K562 (cell line): ENCODE measurements at regions of chr19 and their contacts with region 1.

Region 1: DNA sequence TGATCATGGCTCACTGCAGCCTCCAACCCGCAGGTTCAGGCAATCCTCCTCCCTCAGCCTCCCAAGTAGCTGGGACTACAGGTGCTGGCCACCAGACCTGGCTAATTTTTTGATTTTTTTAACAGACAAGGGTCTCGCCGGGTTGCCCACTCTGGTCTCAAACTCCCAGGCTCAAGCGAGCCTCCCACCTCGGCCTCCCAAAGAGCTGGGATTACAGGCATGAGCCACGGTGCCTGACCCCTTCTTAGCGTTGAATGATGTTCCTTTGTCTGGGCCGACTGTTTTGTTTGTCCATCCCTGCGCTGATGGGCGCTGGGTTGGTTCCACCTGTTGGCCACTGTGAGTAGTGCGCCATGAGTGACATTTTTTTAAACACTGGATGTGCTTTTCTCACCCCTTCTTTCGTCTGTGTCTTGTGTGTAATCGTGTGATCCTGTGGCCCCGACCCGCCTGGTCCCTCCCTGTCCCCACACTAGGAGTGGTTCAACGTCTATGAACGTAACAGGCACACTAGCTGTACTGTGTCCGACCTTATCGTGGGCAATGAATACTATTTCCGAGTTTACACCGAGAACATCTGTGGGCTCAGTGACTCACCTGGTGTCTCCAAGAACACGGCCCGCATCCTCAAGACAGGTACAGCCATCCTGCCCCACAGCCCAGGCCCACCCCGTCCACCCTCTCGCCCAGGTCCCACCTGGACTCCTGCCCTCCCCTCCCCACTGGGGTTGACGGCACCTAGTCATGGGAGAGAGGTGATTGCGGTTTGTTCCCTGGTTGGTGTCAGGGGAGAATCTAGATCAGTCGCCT is 15.0 kb upstream of the EMC10 start:
- DNase-seq: peak; percentile 78 to 88 (median 82)
- ATAC-seq: peak; percentile 90
- H3K4me3 ChIP-seq: no peak overlapping the region
- H3K27ac ChIP-seq: peak overlapping the region; percentile 27; the same call in 1 of the 3 replicates
- H3K4me1 ChIP-seq: peaks cover 8 to 38% of the 10 kb centered on the region in 2 experiments; a peak in 4 of 5 replicates
- H3K27me3 ChIP-seq: peaks cover 6 to 17% of the 10 kb centered on the region in 2 experiments; a peak in 4 of 5 replicates
- CTCF ChIP-seq: peak; percentile 85 to 93 (median 93)
- EP300 ChIP-seq: no peak
- POLR2A ChIP-seq: no peak
- RAD21 ChIP-seq: peak; percentile 74 to 91

Region 2: GRCh38 chr19:50368649-50369570 is 92.4 kb before region 1 on chr19:
- CTCF ChIA-PET with region 1: interaction called, 15 read pairs
- POLR2A ChIA-PET with region 1: interaction called, 7 read pairs
- in situ Hi-C with region 1: loop called (anchors 5 kb)
- intact Hi-C with region 1: loop called (anchors 1 kb)
- DNase-seq: peak; percentile 87 to 93 (median 90)
- ATAC-seq: peak; percentile 82
- H3K4me3 ChIP-seq: peak overlapping the region; percentile 49
- H3K27ac ChIP-seq: peak overlapping the region; percentile 78
- H3K4me1 ChIP-seq: peaks cover 27 to 49% of the 10 kb centered on the region in 2 experiments
- H3K27me3 ChIP-seq: no peaks in the 10 kb centered on the region
- CTCF ChIP-seq: peak; percentile 86 to 88 (median 88)
- EP300 ChIP-seq: no peak
- POLR2A ChIP-seq: peak; percentile 68
- RAD21 ChIP-seq: peak; percentile 82 to 88

Region 3: DNA sequence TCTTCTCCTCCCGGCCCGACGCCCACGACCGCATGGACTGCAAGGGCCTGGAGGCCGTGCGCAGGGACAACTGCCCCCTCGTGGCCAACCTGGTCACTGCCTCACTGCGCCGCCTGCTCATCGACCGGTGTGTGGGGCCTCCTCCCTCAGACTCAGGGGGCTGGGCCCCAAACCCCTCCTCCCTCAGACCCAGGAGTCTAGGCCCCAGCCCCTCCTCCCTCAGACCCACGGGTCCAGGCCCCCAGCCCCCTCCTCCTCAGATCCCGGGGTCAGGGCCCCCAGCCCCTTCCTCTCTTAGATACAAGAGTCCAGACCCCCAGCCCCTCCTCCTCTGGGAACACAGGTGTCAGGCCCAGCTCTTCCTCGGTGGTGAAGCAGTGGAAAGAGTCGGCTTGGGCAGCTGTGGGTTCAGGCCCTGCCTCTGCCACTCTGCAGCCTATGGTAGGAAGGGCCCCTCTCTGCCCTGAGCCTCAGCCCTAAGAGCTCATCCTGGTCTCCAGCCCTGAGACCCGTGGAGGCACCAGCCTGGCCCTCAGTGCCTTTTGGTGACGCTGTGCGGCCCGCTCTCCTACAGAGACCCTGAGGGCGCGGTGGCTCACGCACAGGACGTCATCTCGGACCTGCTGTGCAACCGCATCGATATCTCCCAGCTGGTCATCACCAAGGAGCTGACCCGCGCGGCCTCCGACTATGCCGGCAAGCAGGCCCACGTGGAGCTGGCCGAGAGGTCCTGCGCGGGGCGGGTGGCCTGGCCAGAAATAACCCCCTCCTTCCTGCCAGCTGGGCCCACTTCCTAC is 46.2 kb before region 1 on chr19:
- CTCF ChIA-PET with region 1: no interaction called
- POLR2A ChIA-PET with region 1: no interaction called
- in situ Hi-C with region 1: no loop called
- intact Hi-C with region 1: loop called (anchors 2 kb)
- DNase-seq: peak; percentile 87 to 92 (median 90)
- ATAC-seq: peak; percentile 95
- H3K4me3 ChIP-seq: no peak overlapping the region
- H3K27ac ChIP-seq: peak overlapping the region; percentile 67
- H3K4me1 ChIP-seq: peaks cover 13 to 69% of the 10 kb centered on the region in 2 experiments
- H3K27me3 ChIP-seq: no peaks in the 10 kb centered on the region
- CTCF ChIP-seq: peak; percentile 87 to 95 (median 89)
- EP300 ChIP-seq: no peak
- POLR2A ChIP-seq: peak; percentile 26
- RAD21 ChIP-seq: peak; percentile 69 to 84